ENCODE measurements at regions of chr6 and their contacts with region 1.

Region 1: GRCh38 chr6:42984001-42984923 is at the start of gene PPP2R5D:
- H3K4me3 ChIP-seq: peak within 1 kb of the TSS; percentile 83
- H3K27ac ChIP-seq: peak within 1 kb of the TSS; percentile 53; the same call in 1 of the 2 replicates
- H3K4me1 ChIP-seq: no peaks in the 10 kb centered on the region
- CTCF ChIP-seq: no peak

Region 2: DNA sequence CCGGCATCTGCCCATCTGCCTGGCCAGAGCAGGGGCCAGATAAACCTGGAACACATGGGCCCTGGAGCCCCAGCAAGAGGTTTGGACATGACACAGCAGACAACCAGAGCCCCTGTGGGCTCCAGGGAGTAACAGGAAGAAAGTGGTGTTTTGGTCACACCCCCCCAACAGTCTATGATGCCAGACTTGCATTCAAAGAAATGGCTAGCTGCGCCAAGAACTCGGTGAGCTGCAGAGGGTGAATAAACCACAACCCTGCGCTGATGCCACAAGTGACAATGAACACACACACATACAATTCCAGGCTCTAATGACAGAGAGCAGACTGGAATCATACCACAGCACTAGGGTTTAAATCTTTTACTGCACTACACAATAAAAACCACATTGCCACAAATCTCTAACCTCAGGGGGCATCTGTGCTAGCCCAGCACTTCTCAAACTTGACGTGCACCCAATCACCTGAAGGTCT is 566.6 kb before region 1 on chr6:
- CTCF ChIA-PET with region 1: no interaction called
- POLR2A ChIA-PET with region 1: no interaction called
- H3K4me3 ChIP-seq: no peak overlapping the region
- H3K27ac ChIP-seq: no peak overlapping the region
- H3K4me1 ChIP-seq: no peaks in the 10 kb centered on the region
- CTCF ChIP-seq: no peak

Region 3: DNA sequence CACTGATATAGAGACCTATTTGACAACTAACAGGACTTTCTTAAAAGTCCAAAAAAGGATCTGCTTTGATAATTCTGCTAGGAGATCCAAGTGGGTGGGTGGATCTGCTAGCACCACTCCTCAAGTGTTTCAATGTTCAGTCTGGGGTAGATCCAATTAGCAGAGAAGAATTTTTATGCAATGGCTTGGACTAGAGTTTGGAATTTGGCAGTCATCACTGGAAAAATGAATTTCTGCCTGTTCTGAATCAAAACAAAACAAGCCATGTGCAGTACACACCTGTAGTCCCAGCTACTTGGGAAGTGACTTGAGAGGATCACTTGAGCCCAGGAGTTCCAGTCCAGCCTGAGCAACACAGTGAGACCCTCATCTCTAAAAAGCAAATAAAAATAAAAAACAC is 36.3 kb before region 1 on chr6:
- CTCF ChIA-PET with region 1: interaction called, 3 read pairs
- POLR2A ChIA-PET with region 1: interaction called, 11 read pairs
- H3K4me3 ChIP-seq: no peak overlapping the region
- H3K27ac ChIP-seq: no peak overlapping the region
- H3K4me1 ChIP-seq: no peaks in the 10 kb centered on the region
- CTCF ChIP-seq: no peak

Region 4: GRCh38 chr6:42970871-42971612 is 13.2 kb before region 1 on chr6:
- CTCF ChIA-PET with region 1: no interaction called
- POLR2A ChIA-PET with region 1: interaction called, 29 read pairs
- H3K4me3 ChIP-seq: no peak overlapping the region
- H3K27ac ChIP-seq: no peak overlapping the region
- H3K4me1 ChIP-seq: no peaks in the 10 kb centered on the region
- CTCF ChIP-seq: no peak

Region 5: GRCh38 chr6:43005844-43006243 is 21.6 kb after region 1 on chr6:
- CTCF ChIA-PET with region 1: interaction called, 10 read pairs
- POLR2A ChIA-PET with region 1: interaction called, 17 read pairs
- H3K4me3 ChIP-seq: no peak overlapping the region
- H3K27ac ChIP-seq: no peak overlapping the region
- H3K4me1 ChIP-seq: no peaks in the 10 kb centered on the region
- CTCF ChIP-seq: no peak

Region 6: DNA sequence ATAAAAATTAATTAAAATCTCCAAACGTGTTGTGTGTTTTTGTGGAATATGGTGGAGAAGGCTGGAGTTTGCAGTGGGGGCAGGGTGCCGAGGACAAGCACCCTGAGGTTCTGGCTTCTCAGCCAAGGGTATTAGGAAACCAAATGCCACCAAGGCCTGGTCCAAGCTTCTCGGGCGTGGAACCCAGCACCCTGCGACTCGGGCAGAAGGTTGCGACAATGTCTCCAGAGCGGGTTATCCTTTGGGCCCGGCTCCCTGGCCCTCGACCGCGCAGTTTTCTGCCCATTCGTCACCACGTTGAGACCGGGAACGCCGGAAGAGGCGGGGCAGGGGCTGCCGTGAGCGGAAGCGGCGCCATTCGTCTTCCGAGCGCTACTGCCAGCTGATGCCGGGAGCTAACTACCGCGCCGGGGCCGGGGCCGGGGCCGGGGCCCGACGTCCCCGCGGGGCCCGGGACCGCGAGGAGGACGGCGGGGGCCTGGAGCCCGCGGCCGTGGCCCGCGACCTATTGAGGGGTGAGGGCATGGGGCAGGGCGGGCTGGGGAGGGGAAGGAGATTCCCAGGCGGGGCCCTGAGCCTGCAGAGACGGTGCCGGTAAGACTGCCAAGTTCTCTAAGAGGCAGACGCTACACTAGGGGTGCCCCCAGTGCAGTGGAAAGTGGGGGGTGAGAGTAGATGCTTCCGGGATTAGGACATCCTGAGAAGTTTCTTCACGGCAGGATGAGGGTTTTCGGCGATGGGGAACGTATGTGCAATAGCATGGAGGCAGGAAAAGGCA is 37.2 kb after region 1 on chr6 and contains the start of gene RRP36:
- CTCF ChIA-PET with region 1: interaction called, 3 read pairs
- POLR2A ChIA-PET with region 1: interaction called, 14 read pairs
- H3K4me3 ChIP-seq: peak within 1 kb of the TSS; percentile 91
- H3K27ac ChIP-seq: peak within 1 kb of the TSS; percentile 86
- H3K4me1 ChIP-seq: peaks cover 9% of the 10 kb centered on the region
- CTCF ChIP-seq: no peak

Region 7: GRCh38 chr6:43059168-43060033 is 75.1 kb after region 1 on chr6 and contains the starts of genes KLC4 and MRPL2:
- CTCF ChIA-PET with region 1: no interaction called
- POLR2A ChIA-PET with region 1: interaction called, 24 read pairs
- H3K4me3 ChIP-seq: peak within 1 kb of the TSS; percentile 96
- H3K27ac ChIP-seq: peak within 1 kb of the TSS; percentile 76
- H3K4me1 ChIP-seq: peaks cover 9% of the 10 kb centered on the region
- CTCF ChIP-seq: no peak

Measured in HEK293 (cell line).